Activated CD4-positive, alpha-beta memory T cell treated with anti-CD3 and anti-CD28 coated beads for 36 hours (primary cell): ENCODE measurements at regions of chr1 and their contacts with region 1.

Region 1: GRCh38 chr1:36397378-36398230 is at the start of gene LSM10:
- DNase-seq: peak; percentile 95
- H3K4me3 Mint-ChIP-seq: peak within 1 kb of the TSS; percentile 98
- H3K27ac Mint-ChIP-seq: peak within 1 kb of the TSS; percentile 84
- H3K4me1 Mint-ChIP-seq: peaks cover 28% of the 10 kb centered on the region
- H3K27me3 Mint-ChIP-seq: no peaks in the 10 kb centered on the region
- total RNA-seq, gene LSM10: 46.0 to 47.0 TPM

Region 2: GRCh38 chr1:36411674-36412520 is 14.3 kb after region 1 on chr1:
- CTCF ChIA-PET with region 1: interaction called, 3 read pairs
- POLR2A ChIA-PET with region 1: interaction called, 5 read pairs
- intact Hi-C with region 1: loop called (anchors 1 kb)
- DNase-seq: peak; percentile 81
- H3K4me3 Mint-ChIP-seq: peak overlapping the region; percentile 38
- H3K27ac Mint-ChIP-seq: peak overlapping the region; percentile 65
- H3K4me1 Mint-ChIP-seq: peaks cover 16% of the 10 kb centered on the region
- H3K27me3 Mint-ChIP-seq: no peaks in the 10 kb centered on the region